Activated CD4-positive, alpha-beta T cell treated with anti-CD3 and anti-CD28 coated beads for 36 hours (primary cell): ENCODE measurements at regions of chr9 and their contacts with region 1.

Region 1: DNA sequence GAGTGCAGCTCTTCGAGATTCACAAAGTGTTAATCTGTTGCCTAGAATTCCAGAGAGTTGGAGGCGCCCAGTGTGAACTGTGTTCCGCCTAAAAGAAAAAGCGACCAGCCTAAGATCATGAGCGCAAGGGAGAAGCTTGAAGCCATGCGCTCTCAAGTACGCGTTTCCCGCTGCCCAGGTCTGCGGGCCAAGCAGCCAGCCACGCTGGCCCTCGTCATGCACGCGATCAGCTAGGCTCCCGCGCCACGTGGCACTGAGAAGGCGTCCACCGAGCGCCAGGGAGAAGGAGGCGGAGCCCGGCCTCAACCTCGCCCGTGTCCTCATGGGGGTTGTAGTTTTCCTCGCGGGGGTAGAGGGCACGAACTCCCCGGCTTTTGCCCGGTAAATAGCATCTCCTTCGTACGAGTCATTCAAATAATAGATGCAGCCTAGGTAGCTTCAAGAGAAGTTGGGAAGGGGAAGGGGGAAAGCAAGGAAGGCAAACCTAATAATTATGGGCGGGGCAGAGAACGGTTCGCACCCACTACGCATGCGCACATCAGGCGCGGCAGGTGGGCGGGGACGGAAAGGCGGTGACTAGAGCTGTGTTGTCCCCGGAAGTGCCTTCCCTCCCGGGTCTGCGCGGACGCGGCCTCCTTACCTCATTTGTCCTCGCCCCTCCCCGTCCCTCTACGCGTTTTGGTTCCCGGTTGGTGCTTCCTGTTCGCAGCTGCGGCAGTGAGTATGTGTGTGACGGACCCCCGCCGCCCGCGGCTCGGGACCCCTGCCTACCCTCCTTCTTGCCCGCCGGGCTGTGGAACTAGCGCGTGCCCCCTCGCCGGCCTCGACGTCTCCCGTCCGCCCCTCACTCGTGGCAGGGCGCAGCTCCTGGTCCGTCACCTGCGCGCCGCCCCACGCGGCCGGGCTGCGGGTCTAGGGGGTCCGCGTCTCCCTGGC is at the start of gene ZCCHC7:
- DNase-seq: peak; percentile 98
- ATAC-seq: peak; percentile 98
- H3K4me3 Mint-ChIP-seq: peak within 1 kb of the TSS; percentile 80
- H3K27ac Mint-ChIP-seq: peak within 1 kb of the TSS; percentile 96
- H3K4me1 Mint-ChIP-seq: peaks cover 31% of the 10 kb centered on the region
- H3K27me3 Mint-ChIP-seq: no peaks in the 10 kb centered on the region
- total RNA-seq, gene ZCCHC7: 29.9 to 50.2 TPM

Region 2: DNA sequence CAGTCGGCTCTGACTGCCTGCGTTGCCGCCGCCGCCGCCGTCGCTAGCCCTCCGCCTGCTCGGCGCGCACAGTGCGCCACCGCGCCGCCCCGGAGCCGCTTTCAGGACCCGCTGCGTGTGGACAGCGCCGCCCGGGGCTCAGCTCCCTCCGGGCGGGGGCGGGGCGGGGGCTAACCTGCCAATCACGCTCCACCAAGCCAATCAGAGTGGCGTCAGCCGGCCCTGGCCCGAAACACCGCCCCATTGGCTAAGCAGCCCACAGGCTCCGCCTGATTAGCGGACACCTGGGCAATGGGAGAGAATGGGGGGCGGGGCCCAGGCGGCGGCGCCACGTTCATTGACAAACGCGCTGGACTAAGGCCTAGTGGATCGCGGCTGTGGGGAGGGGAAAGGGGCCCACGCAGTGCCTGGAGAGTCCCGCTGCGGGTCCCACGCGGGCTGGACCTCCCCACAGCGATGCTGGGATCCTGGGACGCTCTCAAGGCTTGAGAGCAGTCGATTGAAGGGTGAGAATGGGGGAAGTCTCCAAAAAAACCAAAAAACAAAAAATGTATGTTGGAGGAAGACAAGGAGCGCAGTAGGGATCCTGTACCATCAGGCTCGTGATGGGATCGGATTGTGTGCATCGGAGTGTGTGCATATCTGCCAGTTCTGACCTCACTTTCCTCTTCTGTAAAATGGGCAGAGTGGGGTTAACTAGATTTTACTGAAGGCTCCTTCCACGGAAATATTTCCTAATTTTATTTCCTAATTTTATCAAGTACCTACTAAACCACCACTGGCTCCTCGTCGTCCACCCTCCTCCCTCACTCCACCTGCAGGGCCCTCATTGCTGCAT is 92.4 kb before region 1 on chr9:
- CTCF ChIA-PET with region 1: interaction called, 4 read pairs
- POLR2A ChIA-PET with region 1: no interaction called
- intact Hi-C with region 1: loop called (anchors 1 to 5 kb)
- DNase-seq: peak; percentile 96
- ATAC-seq: peak; percentile 97
- H3K4me3 Mint-ChIP-seq: peak overlapping the region; percentile 64
- H3K27ac Mint-ChIP-seq: no peak overlapping the region
- H3K4me1 Mint-ChIP-seq: peaks cover 37% of the 10 kb centered on the region
- H3K27me3 Mint-ChIP-seq: peaks cover 80% of the 10 kb centered on the region

Region 3: GRCh38 chr9:37422289-37423104 is 302.3 kb after region 1 on chr9 and contains the start of gene GRHPR:
- CTCF ChIA-PET with region 1: no interaction called
- POLR2A ChIA-PET with region 1: no interaction called
- intact Hi-C with region 1: loop called (anchors 1 to 2 kb)
- DNase-seq: peak; percentile 95
- ATAC-seq: peak; percentile 99
- H3K4me3 Mint-ChIP-seq: peak within 1 kb of the TSS; percentile 91
- H3K27ac Mint-ChIP-seq: peak within 1 kb of the TSS; percentile 95
- H3K4me1 Mint-ChIP-seq: peaks cover 25% of the 10 kb centered on the region
- H3K27me3 Mint-ChIP-seq: no peaks in the 10 kb centered on the region
- total RNA-seq, gene GRHPR: 69.1 to 74.4 TPM